ENCODE measurements at regions of chr2 and their contacts with region 1.

Region 1: DNA sequence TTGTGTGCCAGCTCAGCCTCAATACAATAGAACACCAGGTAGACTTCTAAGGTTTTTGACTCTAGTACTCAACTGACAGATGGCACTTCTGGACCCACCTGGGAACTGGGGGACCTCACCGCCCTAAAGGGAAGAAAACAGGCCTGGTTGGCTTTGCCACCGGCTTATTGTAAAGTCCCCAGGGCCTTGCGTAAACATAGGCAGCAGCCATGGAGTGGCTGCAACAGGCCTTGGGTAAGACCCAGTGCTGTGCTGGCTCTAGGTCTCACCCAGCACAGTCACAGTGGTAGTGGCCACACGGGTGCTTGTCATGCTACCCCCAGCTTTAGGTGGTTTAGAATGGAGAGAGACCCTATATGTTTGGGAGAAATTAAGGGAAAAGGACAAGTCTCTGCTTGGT is 230.7 kb upstream of the SESTD1 start:
- DNase-seq: no peak
- ATAC-seq: no peak
- H3K4me3 ChIP-seq: no peak overlapping the region
- H3K27ac ChIP-seq: no peak overlapping the region
- H3K4me1 ChIP-seq: no peaks in the 10 kb centered on the region
- H3K27me3 ChIP-seq: no peaks in the 10 kb centered on the region
- CTCF ChIP-seq: no peak
- POLR2A ChIP-seq: no peak

Region 2: DNA sequence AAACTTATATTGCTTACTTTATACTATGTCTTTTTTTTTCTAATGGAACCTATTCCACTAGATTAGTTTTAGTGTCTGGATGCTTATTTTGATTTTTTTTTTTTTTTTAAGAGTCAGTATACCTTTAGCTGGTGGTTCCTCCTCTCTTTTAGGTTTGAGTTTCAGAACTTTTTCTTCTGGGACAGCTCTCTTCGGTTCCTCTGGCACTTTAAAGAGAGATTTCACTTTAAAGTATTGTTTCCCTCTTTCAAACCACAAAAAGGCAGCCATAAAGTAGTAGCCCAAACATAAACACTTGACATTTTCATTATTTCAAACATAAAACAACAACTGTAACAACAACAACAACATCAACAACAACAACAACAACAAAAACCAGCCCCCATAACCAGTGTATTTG is 811.4 kb before region 1 on chr2:
- intact Hi-C with region 1: no loop called
- DNase-seq: no peak
- ATAC-seq: no peak
- H3K4me3 ChIP-seq: no peak overlapping the region
- H3K27ac ChIP-seq: no peak overlapping the region
- H3K4me1 ChIP-seq: no peaks in the 10 kb centered on the region
- H3K27me3 ChIP-seq: no peaks in the 10 kb centered on the region
- CTCF ChIP-seq: no peak
- POLR2A ChIP-seq: no peak

Region 3: GRCh38 chr2:179511105-179511789 is 15.9 kb after region 1 on chr2:
- intact Hi-C with region 1: loop called in 1 of 10 experiments (anchors 1 kb)
- DNase-seq: no peak
- ATAC-seq: no peak
- H3K4me3 ChIP-seq: no peak overlapping the region
- H3K27ac ChIP-seq: no peak overlapping the region
- H3K4me1 ChIP-seq: no peaks in the 10 kb centered on the region
- H3K27me3 ChIP-seq: no peaks in the 10 kb centered on the region
- CTCF ChIP-seq: no peak
- POLR2A ChIP-seq: no peak

Region 4: GRCh38 chr2:180115675-180116074 is 620.4 kb after region 1 on chr2:
- intact Hi-C with region 1: no loop called
- DNase-seq: no peak
- ATAC-seq: no peak
- H3K4me3 ChIP-seq: no peak overlapping the region
- H3K27ac ChIP-seq: no peak overlapping the region
- H3K4me1 ChIP-seq: no peaks in the 10 kb centered on the region
- H3K27me3 ChIP-seq: peaks cover 0 to 5% (median 0%) of the 10 kb centered on the region in 9 donors
- CTCF ChIP-seq: no peak
- POLR2A ChIP-seq: no peak